MCF 10A (cell line): ENCODE measurements at regions of chr14 and their contacts with region 1.

Region 1: DNA sequence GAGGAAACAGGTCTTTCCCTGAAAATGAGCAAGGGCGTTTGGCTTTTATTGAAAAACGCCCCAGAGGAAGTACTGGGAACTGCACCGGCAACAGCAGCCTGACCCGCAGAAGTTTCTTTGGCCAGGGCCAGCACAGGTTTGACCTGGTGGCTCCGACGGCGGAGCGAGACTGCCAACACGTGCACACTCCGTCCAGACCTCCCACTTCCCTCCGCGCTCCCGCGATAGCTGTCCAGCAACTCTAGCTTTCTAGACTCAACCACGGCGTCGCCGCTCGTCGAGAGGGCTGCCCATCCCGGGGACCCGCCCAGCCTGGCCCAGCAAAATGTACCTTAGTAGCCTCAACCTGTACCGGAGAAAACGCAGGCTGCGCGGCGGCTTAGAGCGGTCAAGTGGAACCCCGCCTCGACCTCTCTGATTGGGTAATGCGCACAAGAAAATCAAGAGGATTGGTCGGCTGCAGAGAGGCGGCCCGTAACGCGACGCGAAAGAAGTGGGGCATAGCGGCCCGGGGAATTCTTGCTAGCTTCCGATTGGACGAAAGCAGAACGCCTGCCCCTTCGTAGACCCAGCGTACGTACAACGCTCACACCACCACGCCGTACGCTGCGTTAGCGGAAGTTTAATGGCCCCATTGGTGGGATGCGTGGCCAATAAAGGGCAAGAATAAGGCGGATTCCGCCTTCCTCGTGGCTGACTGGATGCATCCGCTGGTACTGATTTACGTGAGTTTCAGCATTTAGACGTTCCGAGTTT is at the start of gene WDR89:
- DNase-seq: peak; percentile 99
- H3K4me3 Mint-ChIP-seq: peak within 1 kb of the TSS; percentile 86
- H3K27ac Mint-ChIP-seq: peak within 1 kb of the TSS; percentile 99
- H3K4me1 Mint-ChIP-seq: peaks cover 18% of the 10 kb centered on the region
- H3K27me3 Mint-ChIP-seq: no peaks in the 10 kb centered on the region
- CTCF ChIP-seq: peak; percentile 67
- total RNA-seq, gene WDR89: 14.3 and 17.4 TPM in 2 replicates

Region 2: GRCh38 chr14:63388763-63389431 is 252.8 kb before region 1 on chr14:
- CTCF ChIA-PET with region 1: interaction called, 4 read pairs
- POLR2A ChIA-PET with region 1: interaction called, 3 read pairs
- intact Hi-C with region 1: loop called (anchors 2 kb)
- DNase-seq: peak; percentile 66
- H3K4me3 Mint-ChIP-seq: no peak overlapping the region
- H3K27ac Mint-ChIP-seq: no peak overlapping the region
- H3K4me1 Mint-ChIP-seq: no peaks in the 10 kb centered on the region
- H3K27me3 Mint-ChIP-seq: no peaks in the 10 kb centered on the region
- CTCF ChIP-seq: peak; percentile 76

Region 3: GRCh38 chr14:63401646-63402045 is 240.0 kb before region 1 on chr14:
- CTCF ChIA-PET with region 1: no interaction called
- POLR2A ChIA-PET with region 1: no interaction called
- intact Hi-C with region 1: no loop called
- DNase-seq: no peak
- H3K4me3 Mint-ChIP-seq: no peak overlapping the region
- H3K27ac Mint-ChIP-seq: no peak overlapping the region
- H3K4me1 Mint-ChIP-seq: peaks cover 5% of the 10 kb centered on the region
- H3K27me3 Mint-ChIP-seq: no peaks in the 10 kb centered on the region
- CTCF ChIP-seq: no peak

Region 4: DNA sequence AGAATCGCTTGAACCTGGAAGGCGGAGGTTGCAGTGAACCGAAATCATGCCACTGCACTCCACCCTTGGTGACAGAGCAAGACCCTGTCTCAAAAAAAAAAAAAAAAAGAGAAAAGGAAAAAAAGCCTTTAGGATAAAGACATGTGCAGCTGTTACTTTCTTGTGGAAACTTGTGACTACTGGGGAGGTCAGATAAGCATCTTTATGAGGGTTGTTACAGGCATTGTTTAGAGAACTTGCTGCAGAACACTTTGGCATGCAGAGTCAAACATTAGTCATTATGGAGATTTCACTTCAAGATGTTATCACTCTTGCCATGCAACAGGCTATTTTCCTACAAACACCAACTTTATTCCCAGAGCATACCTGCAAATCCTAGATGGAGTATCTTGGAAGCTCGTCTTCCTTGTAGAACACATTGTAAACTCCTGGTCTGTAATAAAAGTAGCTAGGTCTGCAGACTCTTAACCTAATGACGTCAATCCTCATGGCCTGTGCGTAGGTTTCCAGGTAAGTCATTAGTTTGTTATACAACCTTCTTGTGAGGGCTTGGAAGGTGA is 36.2 kb after region 1 on chr14:
- CTCF ChIA-PET with region 1: no interaction called
- POLR2A ChIA-PET with region 1: interaction called, 13 read pairs
- intact Hi-C with region 1: no loop called
- DNase-seq: no peak
- H3K4me3 Mint-ChIP-seq: no peak overlapping the region
- H3K27ac Mint-ChIP-seq: no peak overlapping the region
- H3K4me1 Mint-ChIP-seq: no peaks in the 10 kb centered on the region
- H3K27me3 Mint-ChIP-seq: no peaks in the 10 kb centered on the region
- CTCF ChIP-seq: no peak

Region 5: GRCh38 chr14:63710497-63710896 is 68.8 kb after region 1 on chr14:
- CTCF ChIA-PET with region 1: interaction called, 3 read pairs
- POLR2A ChIA-PET with region 1: interaction called, 10 read pairs
- intact Hi-C with region 1: no loop called
- DNase-seq: no peak
- H3K4me3 Mint-ChIP-seq: no peak overlapping the region
- H3K27ac Mint-ChIP-seq: no peak overlapping the region
- H3K4me1 Mint-ChIP-seq: peaks cover 18% of the 10 kb centered on the region
- H3K27me3 Mint-ChIP-seq: no peaks in the 10 kb centered on the region
- CTCF ChIP-seq: no peak

Region 6: DNA sequence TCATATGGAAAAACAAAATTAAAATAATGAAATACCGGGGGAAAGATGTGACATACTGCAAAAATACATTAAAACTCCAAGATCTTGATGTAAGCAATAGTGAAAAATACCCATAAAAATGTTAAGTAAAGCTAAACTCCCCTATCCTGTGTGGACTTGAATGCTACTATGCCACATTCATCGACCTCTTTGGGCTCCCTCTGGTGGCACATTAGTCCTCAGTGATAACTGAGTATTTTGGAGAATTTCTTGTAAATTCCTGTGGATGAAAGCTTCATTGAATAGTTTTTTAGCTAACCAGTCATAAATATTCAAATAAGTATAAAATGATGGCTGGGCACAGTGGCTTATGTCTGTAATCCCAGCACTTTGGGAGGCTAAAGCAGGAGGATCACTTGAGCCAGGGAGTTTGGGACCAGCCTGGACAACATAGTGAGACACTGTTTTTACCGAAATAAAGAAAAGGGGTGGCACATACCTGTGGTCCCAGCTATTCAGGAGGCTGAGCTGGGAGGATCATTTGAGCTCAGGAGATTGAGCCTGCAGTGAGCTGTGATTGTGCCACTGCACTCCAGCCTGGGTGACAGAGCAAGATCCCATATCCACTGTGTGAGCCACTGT is 128.6 kb after region 1 on chr14:
- CTCF ChIA-PET with region 1: interaction called, 60 read pairs
- POLR2A ChIA-PET with region 1: interaction called, 26 read pairs
- intact Hi-C with region 1: loop called (anchors 1 kb)
- DNase-seq: peak; percentile 65
- H3K4me3 Mint-ChIP-seq: no peak overlapping the region
- H3K27ac Mint-ChIP-seq: no peak overlapping the region
- H3K4me1 Mint-ChIP-seq: no peaks in the 10 kb centered on the region
- H3K27me3 Mint-ChIP-seq: no peaks in the 10 kb centered on the region
- CTCF ChIP-seq: peak; percentile 51